HAP-1 (cell line): ENCODE measurements at regions of chr1 and their contacts with region 1.

Region 1: GRCh38 chr1:45490626-45491486 is at the start of gene TESK2:
- DNase-seq: peak; percentile 97 to 99
- H3K4me3 ChIP-seq: peak within 1 kb of the TSS; percentile 69
- H3K4me1 ChIP-seq: peaks cover 14% of the 10 kb centered on the region
- H3K27me3 ChIP-seq: no peaks in the 10 kb centered on the region

Region 2: GRCh38 chr1:44835738-44836675 is 654.8 kb before region 1 on chr1:
- in situ Hi-C with region 1: loop called (anchors 10 kb)
- DNase-seq: peak; percentile 75 to 96
- H3K4me3 ChIP-seq: no peak overlapping the region
- H3K4me1 ChIP-seq: no peaks in the 10 kb centered on the region
- H3K27me3 ChIP-seq: no peaks in the 10 kb centered on the region

Region 3: DNA sequence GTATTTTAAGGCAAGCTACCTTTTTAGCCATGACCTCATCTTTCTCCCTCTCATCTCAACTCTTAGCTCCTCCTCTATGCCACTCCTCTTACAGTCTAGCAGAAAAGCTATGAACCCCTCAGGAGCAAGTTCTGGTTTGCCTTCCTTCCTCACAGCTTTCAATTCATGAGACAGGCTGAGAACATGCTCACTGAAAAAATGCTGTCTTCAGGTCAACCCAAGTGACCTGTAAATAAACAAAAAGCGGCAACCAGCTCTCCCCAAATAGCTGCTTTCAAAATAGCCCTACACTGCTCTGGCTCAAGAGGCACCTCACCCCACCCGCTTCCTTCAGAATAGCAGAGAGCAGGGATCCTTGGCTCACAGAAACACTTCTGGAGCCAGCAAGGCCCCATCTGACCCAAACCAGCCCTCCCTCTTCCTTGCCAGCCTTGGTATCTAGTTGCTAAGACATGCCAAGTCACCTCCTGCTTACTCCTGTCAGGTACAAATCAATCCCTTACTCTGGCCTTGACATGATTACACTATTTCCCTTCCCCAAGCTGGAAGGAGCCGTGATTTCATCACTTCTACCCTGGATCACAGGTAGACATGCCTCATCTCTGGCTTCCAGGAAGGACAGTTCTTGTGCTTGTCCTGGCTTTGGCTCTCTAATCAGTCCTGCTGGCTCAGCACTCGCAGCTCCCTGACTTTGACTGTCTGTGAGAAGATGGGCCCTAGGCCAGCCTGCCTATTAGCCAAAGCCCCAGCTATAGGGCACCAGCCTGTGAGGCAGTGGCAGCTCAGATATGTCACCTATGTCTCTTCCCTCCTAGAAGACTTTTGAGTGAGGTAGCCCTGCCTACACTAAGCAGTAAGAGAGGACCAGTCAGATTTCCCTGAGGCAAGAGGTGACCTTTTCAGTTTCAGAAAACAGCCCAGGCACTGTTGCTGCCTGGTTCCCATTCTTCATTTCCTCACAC is 141.9 kb before region 1 on chr1:
- in situ Hi-C with region 1: loop called (anchors 5 kb)
- DNase-seq: no peak
- H3K4me3 ChIP-seq: no peak overlapping the region
- H3K4me1 ChIP-seq: no peaks in the 10 kb centered on the region
- H3K27me3 ChIP-seq: no peaks in the 10 kb centered on the region